HEK293 (cell line): ENCODE measurements at regions of chr2 and their contacts with region 1.

Region 1: GRCh38 chr2:84905181-84906107 is at the start of gene TMSB10:
- H3K4me3 ChIP-seq: peak within 1 kb of the TSS; percentile 88
- H3K27ac ChIP-seq: peak within 1 kb of the TSS; percentile 81
- H3K4me1 ChIP-seq: peaks cover 5% of the 10 kb centered on the region
- CTCF ChIP-seq: no peak; the same call in 1 of the 2 replicates

Region 2: DNA sequence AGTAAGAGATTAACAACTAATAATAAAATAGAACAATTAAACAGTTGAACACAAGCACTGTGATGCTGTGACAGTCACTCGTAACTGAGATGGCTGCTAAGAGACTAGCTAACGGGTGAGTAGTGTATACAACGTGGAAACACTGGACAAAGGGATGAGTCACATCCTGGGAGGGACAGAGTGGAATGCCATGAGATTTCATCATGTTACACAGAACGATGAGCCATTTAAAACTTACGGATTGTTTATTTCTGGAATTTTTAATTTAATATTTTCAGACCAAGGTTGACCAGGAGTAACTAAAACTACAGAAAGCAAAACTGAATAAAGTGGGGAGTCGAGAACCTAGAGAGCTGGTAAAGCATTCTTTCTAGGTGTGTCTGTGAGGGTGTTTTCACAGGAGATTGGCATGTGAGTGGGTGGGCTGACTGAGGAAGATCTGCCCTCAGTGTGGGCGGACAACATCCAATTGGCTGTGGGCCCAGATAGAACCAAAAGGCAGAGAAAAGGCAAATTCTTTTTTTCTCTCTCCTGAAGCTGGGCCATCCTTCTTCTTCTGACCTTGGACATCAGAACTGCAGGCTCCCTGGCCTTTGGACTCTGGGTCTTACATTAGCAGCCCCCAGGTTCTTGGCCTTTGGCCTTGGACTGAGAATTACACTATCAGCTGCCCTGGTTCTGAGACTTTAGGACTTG is 14.6 kb after region 1 on chr2:
- CTCF ChIA-PET with region 1: interaction called, 24 read pairs
- POLR2A ChIA-PET with region 1: interaction called, 38 read pairs
- H3K4me3 ChIP-seq: peak overlapping the region; percentile 13; the same call in 1 of the 2 replicates
- H3K27ac ChIP-seq: peak overlapping the region; percentile 47
- H3K4me1 ChIP-seq: peaks cover 6% of the 10 kb centered on the region; the same call in 1 of the 2 replicates
- CTCF ChIP-seq: no peak